Natural killer cell (primary cell): ENCODE measurements at regions of chr1 and their contacts with region 1.

Region 1: GRCh38 chr1:39816415-39817090 is 27.9 kb upstream of the BMP8B start:
- DNase-seq: peak; percentile 59 to 80
- ATAC-seq: peak; percentile 67 to 78 (median 73)
- H3K4me3 ChIP-seq: peak overlapping the region; percentile 7
- H3K4me3 Mint-ChIP-seq: peak overlapping the region; percentile 75
- H3K27ac ChIP-seq: no peak overlapping the region
- H3K27ac Mint-ChIP-seq: peak overlapping the region; percentile 70 to 78
- H3K4me1 ChIP-seq: peaks cover 13% of the 10 kb centered on the region
- H3K4me1 Mint-ChIP-seq: peaks cover 7 to 16% of the 10 kb centered on the region in 2 donors
- H3K27me3 ChIP-seq: no peaks in the 10 kb centered on the region
- H3K27me3 Mint-ChIP-seq: peaks cover 0 to 6% of the 10 kb centered on the region in 2 donors
- CTCF ChIP-seq: peak; percentile 83

Region 2: GRCh38 chr1:39238476-39238875 is 578.1 kb before region 1 on chr1:
- intact Hi-C with region 1: no loop called
- DNase-seq: no peak
- ATAC-seq: no peak
- H3K4me3 ChIP-seq: no peak overlapping the region
- H3K4me3 Mint-ChIP-seq: no peak overlapping the region
- H3K27ac ChIP-seq: no peak overlapping the region
- H3K27ac Mint-ChIP-seq: peak overlapping the region; percentile 70 to 85
- H3K4me1 ChIP-seq: peaks cover 13% of the 10 kb centered on the region
- H3K4me1 Mint-ChIP-seq: peaks cover 48 to 62% of the 10 kb centered on the region in 2 donors
- H3K27me3 ChIP-seq: no peaks in the 10 kb centered on the region
- H3K27me3 Mint-ChIP-seq: no peaks in the 10 kb centered on the region
- CTCF ChIP-seq: no peak

Region 3: DNA sequence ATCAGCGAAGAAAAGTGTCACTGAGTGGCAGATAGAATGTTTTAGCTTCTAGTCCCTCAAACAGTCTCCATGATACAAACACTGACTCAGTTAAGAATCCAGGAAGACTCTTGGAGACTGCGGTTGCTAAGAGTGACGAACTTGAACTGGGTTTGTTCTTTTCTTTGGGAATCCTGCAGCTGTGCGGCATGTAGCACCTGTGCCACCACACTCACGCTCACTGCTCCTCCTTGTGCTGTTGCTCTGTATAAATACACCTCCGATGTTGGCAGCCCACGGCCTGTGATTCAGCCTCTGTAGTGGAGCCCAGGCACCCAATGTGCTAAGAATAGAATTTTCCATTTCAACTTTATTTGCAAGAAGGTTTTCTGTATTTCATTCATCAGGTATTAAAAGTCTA is 83.4 kb before region 1 on chr1:
- intact Hi-C with region 1: no loop called
- DNase-seq: no peak
- ATAC-seq: no peak
- H3K4me3 ChIP-seq: no peak overlapping the region
- H3K4me3 Mint-ChIP-seq: no peak overlapping the region
- H3K27ac ChIP-seq: no peak overlapping the region
- H3K27ac Mint-ChIP-seq: no peak overlapping the region
- H3K4me1 ChIP-seq: peaks cover 21% of the 10 kb centered on the region
- H3K4me1 Mint-ChIP-seq: peaks cover 31 to 35% of the 10 kb centered on the region in 2 donors
- H3K27me3 ChIP-seq: peaks cover 3% of the 10 kb centered on the region
- H3K27me3 Mint-ChIP-seq: peaks cover 26 to 36% of the 10 kb centered on the region in 2 donors
- CTCF ChIP-seq: no peak

Region 4: DNA sequence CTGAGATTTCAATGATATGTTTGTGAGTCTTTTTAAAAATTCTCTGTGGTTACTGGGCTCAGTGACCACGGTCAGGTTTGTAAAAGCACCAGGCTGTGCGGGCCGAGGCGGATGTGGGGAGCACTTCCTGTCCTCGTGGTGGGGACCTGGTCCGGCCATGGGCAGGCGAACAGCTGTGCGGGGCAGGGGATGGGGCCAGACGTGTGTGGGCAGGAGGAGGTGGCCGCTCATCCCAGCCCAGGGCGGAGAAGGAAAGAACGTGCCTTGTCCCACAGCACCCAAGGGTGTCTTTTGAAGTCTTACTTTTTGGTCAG is 40.2 kb before region 1 on chr1:
- intact Hi-C with region 1: no loop called
- DNase-seq: no peak
- ATAC-seq: peak; percentile 33 to 49 (median 38)
- H3K4me3 ChIP-seq: no peak overlapping the region
- H3K4me3 Mint-ChIP-seq: peak overlapping the region; percentile 42
- H3K27ac ChIP-seq: peak overlapping the region; percentile 25
- H3K27ac Mint-ChIP-seq: peak overlapping the region; percentile 67 to 73
- H3K4me1 ChIP-seq: peaks cover 16% of the 10 kb centered on the region
- H3K4me1 Mint-ChIP-seq: peaks cover 5 to 18% of the 10 kb centered on the region in 2 donors
- H3K27me3 ChIP-seq: no peaks in the 10 kb centered on the region
- H3K27me3 Mint-ChIP-seq: no peaks in the 10 kb centered on the region
- CTCF ChIP-seq: no peak

Region 5: GRCh38 chr1:39901698-39902459 is 85.3 kb after region 1 on chr1 and contains the start of gene MYCL:
- intact Hi-C with region 1: loop called (anchors 5 kb)
- DNase-seq: peak; percentile 46 to 80
- ATAC-seq: peak; percentile 78 to 80 (median 78)
- H3K4me3 ChIP-seq: peak within 1 kb of the TSS; percentile 52
- H3K4me3 Mint-ChIP-seq: peak within 1 kb of the TSS; percentile 75
- H3K27ac ChIP-seq: no peak within 1 kb of the TSS
- H3K27ac Mint-ChIP-seq: no peak within 1 kb of the TSS
- H3K4me1 ChIP-seq: peaks cover 16% of the 10 kb centered on the region
- H3K4me1 Mint-ChIP-seq: peaks cover 0 to 12% of the 10 kb centered on the region in 2 donors
- H3K27me3 ChIP-seq: peaks cover 19% of the 10 kb centered on the region
- H3K27me3 Mint-ChIP-seq: peaks cover 42 to 52% of the 10 kb centered on the region in 2 donors
- CTCF ChIP-seq: peak; percentile 62
- total RNA-seq, gene MYCL: 0.70 to 1.9 (median 0.92) TPM

Region 6: DNA sequence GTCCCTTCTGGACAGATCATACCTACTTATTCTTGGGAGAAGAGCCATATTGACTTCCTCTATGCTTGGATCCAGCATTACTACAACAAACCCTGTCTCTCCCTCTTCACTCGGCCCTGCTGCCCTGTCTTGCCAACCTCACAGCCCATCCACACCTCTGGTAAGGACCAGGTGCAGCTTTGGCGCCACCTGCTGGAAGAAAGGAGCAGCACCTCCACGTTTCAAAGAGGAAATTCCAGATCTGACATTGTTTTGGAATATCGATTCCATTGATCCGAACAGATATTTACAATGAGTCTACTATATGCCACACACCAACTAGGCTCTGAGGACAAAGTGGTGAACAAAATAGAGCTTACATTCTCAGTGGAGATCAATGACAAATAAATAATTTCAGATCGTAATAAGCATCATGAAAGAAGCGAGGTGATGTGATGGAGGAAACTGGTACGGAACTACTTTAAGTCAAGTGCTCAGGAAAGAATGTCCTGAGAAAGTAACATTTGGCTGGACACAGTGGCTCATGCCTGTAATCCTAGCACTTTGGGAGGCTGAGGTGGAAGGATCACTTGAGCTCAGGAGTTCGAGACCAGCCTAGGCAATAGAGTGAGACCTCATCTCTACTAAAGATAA is 157.1 kb after region 1 on chr1:
- intact Hi-C with region 1: loop called (anchors 1 kb)
- DNase-seq: peak; percentile 66 to 86
- ATAC-seq: peak; percentile 78 to 88 (median 88)
- H3K4me3 ChIP-seq: no peak overlapping the region
- H3K4me3 Mint-ChIP-seq: no peak overlapping the region
- H3K27ac ChIP-seq: no peak overlapping the region
- H3K27ac Mint-ChIP-seq: no peak overlapping the region
- H3K4me1 ChIP-seq: peaks cover 5% of the 10 kb centered on the region
- H3K4me1 Mint-ChIP-seq: peaks cover 7% of the 10 kb centered on the region in 2 donors
- H3K27me3 ChIP-seq: no peaks in the 10 kb centered on the region
- H3K27me3 Mint-ChIP-seq: no peaks in the 10 kb centered on the region
- CTCF ChIP-seq: peak; percentile 98

Region 7: DNA sequence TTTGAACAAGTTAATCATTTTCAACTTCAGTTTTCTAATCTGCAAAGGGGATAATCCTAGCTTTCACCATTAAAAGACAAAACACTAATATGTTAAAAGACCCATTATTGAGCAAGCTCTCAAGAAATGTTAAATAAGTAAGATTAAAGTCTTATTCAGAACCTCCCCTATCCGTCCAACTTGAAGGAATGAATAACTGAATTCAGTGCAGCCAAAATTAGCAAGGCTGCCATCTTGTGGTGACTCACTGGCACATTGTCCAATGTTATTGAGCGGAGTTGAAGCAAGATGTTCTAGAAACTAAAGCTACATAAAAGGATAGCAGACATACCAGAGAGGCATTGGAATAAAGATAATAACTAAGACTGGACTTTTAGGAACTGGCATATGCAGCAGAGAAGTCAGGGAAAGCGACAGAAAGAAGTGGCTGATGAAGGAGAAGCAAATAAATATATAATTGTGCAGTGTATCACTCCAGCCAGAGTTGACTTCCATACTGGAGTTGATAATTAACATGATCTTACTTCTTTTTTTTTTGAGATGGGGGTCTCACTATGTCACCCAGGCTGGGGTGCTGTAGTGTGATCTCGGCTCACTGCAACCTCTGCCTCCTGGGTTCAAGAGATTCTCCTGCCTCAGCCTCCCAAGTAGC is 215.8 kb after region 1 on chr1:
- intact Hi-C with region 1: loop called (anchors 2 kb)
- DNase-seq: peak in 1 of 2 donors; percentile 80
- ATAC-seq: peak; percentile 75 to 85 (median 82)
- H3K4me3 ChIP-seq: no peak overlapping the region
- H3K4me3 Mint-ChIP-seq: no peak overlapping the region
- H3K27ac ChIP-seq: no peak overlapping the region
- H3K27ac Mint-ChIP-seq: peak overlapping the region; percentile 1 to 47
- H3K4me1 ChIP-seq: peaks cover 31% of the 10 kb centered on the region
- H3K4me1 Mint-ChIP-seq: peaks cover 24 to 40% of the 10 kb centered on the region in 2 donors
- H3K27me3 ChIP-seq: no peaks in the 10 kb centered on the region
- H3K27me3 Mint-ChIP-seq: no peaks in the 10 kb centered on the region
- CTCF ChIP-seq: peak; percentile 67

Region 8: GRCh38 chr1:40078512-40079333 is 262.2 kb after region 1 on chr1:
- intact Hi-C with region 1: no loop called
- DNase-seq: peak in 1 of 2 donors; percentile 81
- ATAC-seq: peak; percentile 81 to 95 (median 83)
- H3K4me3 ChIP-seq: no peak overlapping the region
- H3K4me3 Mint-ChIP-seq: no peak overlapping the region
- H3K27ac ChIP-seq: no peak overlapping the region
- H3K27ac Mint-ChIP-seq: peak overlapping the region; percentile 42 to 44
- H3K4me1 ChIP-seq: peaks cover 6% of the 10 kb centered on the region
- H3K4me1 Mint-ChIP-seq: peaks cover 0 to 21% of the 10 kb centered on the region in 2 donors
- H3K27me3 ChIP-seq: no peaks in the 10 kb centered on the region
- H3K27me3 Mint-ChIP-seq: no peaks in the 10 kb centered on the region
- CTCF ChIP-seq: peak; percentile 84